ENCODE measurements at regions of chr12 and their contacts with region 1.

Region 1: GRCh38 chr12:49232940-49233841 is 31.7 kb upstream of the TUBA1C start:
- DNase-seq: peak in 1 of 2 donors; percentile 76
- H3K4me3 ChIP-seq: peak overlapping the region; percentile 0 to 41
- H3K27ac ChIP-seq: peak overlapping the region; percentile 79 to 80
- H3K4me1 ChIP-seq: peaks cover 3 to 26% of the 10 kb centered on the region in 2 donors
- H3K27me3 ChIP-seq: no peaks in the 10 kb centered on the region
- CTCF ChIP-seq: peak in 1 of 3 experiments; percentile 18

Region 2: GRCh38 chr12:49088190-49088931 is 144.8 kb before region 1 on chr12:
- intact Hi-C with region 1: loop called (anchors 1 kb)
- DNase-seq: peak; percentile 63 to 86
- H3K4me3 ChIP-seq: peak overlapping the region in 1 of 2 donors; percentile 22
- H3K27ac ChIP-seq: no peak overlapping the region
- H3K4me1 ChIP-seq: peaks cover 12 to 23% of the 10 kb centered on the region in 2 donors
- H3K27me3 ChIP-seq: peaks cover 3% of the 10 kb centered on the region
- CTCF ChIP-seq: peak; percentile 81 to 91 (median 88)

Region 3: DNA sequence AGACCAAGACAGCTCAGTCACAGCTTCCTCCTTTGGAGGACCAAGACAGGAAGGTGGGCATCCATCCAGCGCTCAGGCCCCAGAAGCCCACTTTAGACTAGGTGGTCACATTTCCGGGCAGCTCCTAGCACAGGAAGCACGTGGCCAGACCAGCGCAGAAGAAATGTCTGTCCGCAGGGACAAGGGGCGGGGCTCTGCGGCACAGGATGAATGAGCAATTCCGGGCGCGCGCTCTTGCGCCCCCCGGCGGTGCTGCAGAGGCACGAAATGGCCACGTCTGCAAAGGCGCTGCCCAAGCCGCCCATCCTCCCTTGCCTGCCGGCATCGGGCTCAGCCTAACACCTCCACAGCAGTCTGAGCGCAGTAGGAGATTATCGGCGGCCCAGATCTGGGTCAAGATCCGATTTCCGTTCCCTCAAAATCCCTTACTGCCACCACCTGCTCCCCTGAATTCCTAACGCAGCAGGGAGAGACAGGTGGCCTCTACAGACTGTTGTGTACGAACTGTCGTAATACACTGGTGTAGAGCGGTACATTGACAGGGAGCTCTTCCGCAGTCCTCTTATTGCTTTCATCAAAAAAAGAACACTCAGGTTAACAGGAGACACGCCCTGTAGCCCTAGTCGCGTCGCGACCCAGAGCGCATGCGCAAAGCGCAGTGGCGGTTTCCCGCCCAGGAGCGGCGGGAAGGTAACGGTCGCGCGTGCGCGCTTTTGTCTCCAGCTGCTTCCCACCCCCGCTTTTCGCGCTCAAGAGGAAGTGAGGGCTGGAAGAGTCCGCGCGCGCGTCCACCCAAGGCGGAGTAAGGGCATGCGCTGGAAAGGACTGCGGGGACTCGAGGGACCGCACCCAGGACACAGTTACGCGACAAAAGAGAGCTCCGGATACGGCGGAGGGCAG is 102.8 kb before region 1 on chr12:
- intact Hi-C with region 1: loop called (anchors 1 kb)
- DNase-seq: peak; percentile 83 to 97
- H3K4me3 ChIP-seq: peak overlapping the region; percentile 92
- H3K27ac ChIP-seq: peak overlapping the region; percentile 100
- H3K4me1 ChIP-seq: peaks cover 14 to 23% of the 10 kb centered on the region in 2 donors
- H3K27me3 ChIP-seq: no peaks in the 10 kb centered on the region
- CTCF ChIP-seq: peak; percentile 89 to 95 (median 93)

Region 4: GRCh38 chr12:49200919-49201594 is 32.1 kb before region 1 on chr12:
- intact Hi-C with region 1: loop called (anchors 1 kb)
- DNase-seq: no peak
- H3K4me3 ChIP-seq: peak overlapping the region; percentile 29 to 34
- H3K27ac ChIP-seq: peak overlapping the region; percentile 53 to 86
- H3K4me1 ChIP-seq: peaks cover 6 to 7% of the 10 kb centered on the region in 2 donors
- H3K27me3 ChIP-seq: no peaks in the 10 kb centered on the region
- CTCF ChIP-seq: no peak

Measured in ascending aorta (tissue), 2 donors.